Right cardiac atrium (tissue), 5 donors: ENCODE measurements at regions of chr9 and their contacts with region 1.

Region 1: GRCh38 chr9:13557746-13558145 is 278.3 kb upstream of the MPDZ start:
- DNase-seq: no peak
- ATAC-seq: peak; percentile 54 to 81
- H3K4me3 ChIP-seq: no peak overlapping the region
- H3K27ac ChIP-seq: no peak overlapping the region
- H3K4me1 ChIP-seq: no peaks in the 10 kb centered on the region
- H3K27me3 ChIP-seq: no peaks in the 10 kb centered on the region

Region 2: GRCh38 chr9:13140843-13141592 is 416.7 kb before region 1 on chr9:
- intact Hi-C with region 1: no loop called
- DNase-seq: peak in 1 of 3 donors; percentile 30
- ATAC-seq: no peak
- H3K4me3 ChIP-seq: no peak overlapping the region
- H3K27ac ChIP-seq: no peak overlapping the region
- H3K4me1 ChIP-seq: no peaks in the 10 kb centered on the region
- H3K27me3 ChIP-seq: no peaks in the 10 kb centered on the region

Region 3: DNA sequence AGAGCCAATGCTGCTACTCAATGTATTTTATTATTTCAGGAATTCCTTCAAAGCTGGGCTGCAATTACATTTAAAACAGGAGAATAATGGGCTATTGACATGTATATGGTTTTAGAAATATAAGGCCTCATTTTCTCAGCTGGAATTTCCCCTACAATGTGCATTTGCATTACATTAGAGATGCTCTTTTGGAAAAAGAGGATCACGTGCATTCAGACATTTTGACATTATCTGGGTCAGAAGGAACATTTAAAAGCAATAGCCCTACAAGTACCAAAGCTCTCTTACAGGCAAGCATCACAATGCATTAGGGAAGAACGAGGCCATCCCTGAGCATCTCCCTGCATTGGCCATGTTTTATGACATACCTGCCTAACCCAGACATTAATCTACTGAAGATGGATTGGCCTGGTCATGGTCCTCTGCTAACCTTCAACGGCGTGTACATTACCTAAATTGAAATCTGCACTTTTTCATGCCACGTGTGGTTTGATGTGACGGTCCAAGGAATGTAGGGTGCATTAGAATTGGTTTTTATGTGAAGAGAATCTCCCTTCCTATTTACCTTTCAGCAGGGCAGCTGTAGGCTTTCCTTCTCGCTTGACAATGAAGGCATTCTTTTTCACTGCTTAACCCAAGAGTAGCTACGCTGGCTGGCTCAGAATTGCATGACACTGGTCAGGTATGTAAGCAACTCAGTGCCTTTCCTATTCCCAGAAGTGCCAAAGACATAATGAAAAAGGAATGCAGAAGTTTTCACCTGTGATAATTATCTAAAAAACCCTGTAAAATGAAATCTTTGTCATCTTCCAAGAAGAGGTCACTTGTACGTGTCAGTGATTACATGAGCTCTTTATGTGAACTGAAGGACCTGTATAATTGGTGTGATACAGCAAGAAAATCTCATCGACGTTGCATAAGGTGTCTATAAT is 66.0 kb before region 1 on chr9:
- intact Hi-C with region 1: loop called in 1 of 4 experiments (anchors 10 kb)
- DNase-seq: no peak
- ATAC-seq: no peak
- H3K4me3 ChIP-seq: no peak overlapping the region
- H3K27ac ChIP-seq: no peak overlapping the region
- H3K4me1 ChIP-seq: peaks cover 5% of the 10 kb centered on the region
- H3K27me3 ChIP-seq: no peaks in the 10 kb centered on the region